CD8-positive, alpha-beta T cell (primary cell): ENCODE measurements at regions of chr2 and their contacts with region 1.

Region 1: GRCh38 chr2:27628767-27629709 is at the starts of genes CCDC121 and GPN1:
- DNase-seq: peak; percentile 88 to 97 (median 95)
- ATAC-seq: peak; percentile 98
- H3K4me3 ChIP-seq: peak within 1 kb of the TSS; percentile 94 to 98
- H3K4me3 Mint-ChIP-seq: no peak within 1 kb of the TSS
- H3K27ac ChIP-seq: peak within 1 kb of the TSS; percentile 84 to 91
- H3K27ac Mint-ChIP-seq: peak within 1 kb of the TSS; percentile 46
- H3K4me1 ChIP-seq: peaks cover 18% of the 10 kb centered on the region
- H3K4me1 Mint-ChIP-seq: peaks cover 20% of the 10 kb centered on the region
- H3K27me3 ChIP-seq: no peaks in the 10 kb centered on the region
- H3K27me3 Mint-ChIP-seq: no peaks in the 10 kb centered on the region
- CTCF ChIP-seq: no peak
- total RNA-seq, gene CCDC121: 0.92 to 1.4 TPM
- total RNA-seq, gene GPN1: 40.6 to 41.7 TPM

Region 2: DNA sequence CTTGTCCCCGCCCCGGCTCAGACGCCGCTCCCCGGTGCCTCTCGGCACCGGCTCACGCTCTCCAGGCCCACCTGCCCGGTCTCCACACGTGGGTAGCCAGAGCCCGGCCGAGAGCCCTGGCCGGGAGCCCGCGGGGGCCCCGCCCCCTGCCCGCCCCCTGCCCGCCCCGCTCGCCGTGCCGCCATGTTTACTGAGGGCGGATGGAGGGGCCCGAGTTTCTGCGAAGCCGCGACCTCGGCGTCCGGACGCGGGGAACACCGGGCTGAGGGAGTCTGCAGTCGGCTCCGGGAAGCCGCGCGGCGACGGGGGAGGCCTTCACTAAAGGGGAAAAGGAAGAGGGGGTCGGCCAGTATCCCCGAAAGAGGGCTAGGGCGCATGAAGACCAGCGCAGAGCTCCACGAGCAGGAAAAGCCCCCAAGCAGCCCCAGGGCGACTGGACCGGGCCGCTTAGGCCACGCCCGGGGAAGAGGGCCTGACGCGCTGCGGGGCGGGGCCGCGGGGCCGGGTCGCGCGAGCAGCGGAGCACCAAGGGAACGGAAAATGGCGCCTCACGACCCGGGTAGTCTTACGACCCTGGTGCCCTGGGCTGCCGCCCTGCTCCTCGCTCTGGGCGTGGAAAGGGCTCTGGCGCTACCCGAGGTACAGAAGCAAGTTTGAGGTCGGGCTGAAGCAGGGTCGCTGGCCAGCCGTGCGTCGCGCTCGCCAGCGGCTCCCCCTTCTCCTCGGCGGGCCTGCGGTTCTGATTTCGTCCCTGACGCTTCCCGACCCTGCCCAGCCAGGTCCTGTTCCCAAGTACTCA is 417.0 kb before region 1 on chr2 and contains the starts of genes ATRAID and SLC5A6:
- CTCF ChIA-PET with region 1: no interaction called
- POLR2A ChIA-PET with region 1: no interaction called
- intact Hi-C with region 1: loop called in 1 of 2 experiments (anchors 2 kb)
- DNase-seq: peak; percentile 78 to 94 (median 87)
- ATAC-seq: peak; percentile 84
- H3K4me3 ChIP-seq: peak within 1 kb of the TSS; percentile 67 to 99
- H3K4me3 Mint-ChIP-seq: peak within 1 kb of the TSS; percentile 100
- H3K27ac ChIP-seq: peak within 1 kb of the TSS; percentile 97 to 100
- H3K27ac Mint-ChIP-seq: peak within 1 kb of the TSS; percentile 100
- H3K4me1 ChIP-seq: peaks cover 26% of the 10 kb centered on the region
- H3K4me1 Mint-ChIP-seq: peaks cover 44% of the 10 kb centered on the region
- H3K27me3 ChIP-seq: no peaks in the 10 kb centered on the region
- H3K27me3 Mint-ChIP-seq: no peaks in the 10 kb centered on the region
- CTCF ChIP-seq: no peak
- total RNA-seq, gene ATRAID: 70.0 to 71.7 TPM
- total RNA-seq, gene SLC5A6: 410 to 431 TPM

Region 3: DNA sequence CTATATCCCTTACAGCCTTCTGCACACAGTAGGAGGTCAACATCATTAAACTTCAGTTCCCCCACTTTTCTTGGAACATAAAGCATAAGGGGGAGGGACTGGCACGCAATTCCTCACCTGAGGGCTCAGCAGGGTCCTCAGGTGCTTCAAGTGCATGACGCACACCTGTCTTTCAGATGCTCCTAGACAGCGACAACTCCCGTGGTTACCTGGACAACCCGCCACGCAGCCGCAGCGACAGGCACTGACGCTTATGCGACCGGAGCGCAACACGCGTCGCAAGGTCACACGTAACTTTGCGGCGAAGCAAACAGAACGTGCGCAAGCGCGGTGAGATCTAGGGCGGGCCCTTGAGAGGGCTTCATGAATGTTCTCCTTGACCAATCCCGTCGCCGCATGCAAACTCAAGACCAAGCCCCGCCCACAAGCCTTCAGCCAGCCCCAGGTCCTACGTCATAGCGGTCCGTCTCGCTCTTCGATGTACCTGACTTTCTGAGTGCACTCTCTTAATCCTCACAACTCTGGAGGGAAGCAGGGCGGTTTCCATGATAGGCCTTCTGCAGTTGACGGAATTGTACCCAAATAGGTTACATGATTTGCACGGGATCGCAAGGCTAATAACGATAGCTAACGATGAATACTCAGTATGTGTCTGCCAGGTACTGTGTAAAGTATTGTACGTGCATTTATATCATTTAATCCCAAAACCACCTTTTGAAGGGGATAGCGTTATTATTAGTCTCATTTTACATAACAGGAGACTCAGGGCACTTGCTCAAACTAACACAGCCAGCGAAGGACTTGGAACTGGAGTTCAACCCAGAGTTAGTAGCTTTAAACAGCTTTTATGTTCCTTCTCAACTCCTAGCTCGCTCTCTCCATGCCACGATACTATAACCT is 139.3 kb before region 1 on chr2 and contains the start of gene IFT172:
- CTCF ChIA-PET with region 1: no interaction called
- POLR2A ChIA-PET with region 1: interaction called, 3 read pairs
- intact Hi-C with region 1: loop called (anchors 1 kb)
- DNase-seq: peak; percentile 98 to 100 (median 99)
- ATAC-seq: peak; percentile 91
- H3K4me3 ChIP-seq: peak within 1 kb of the TSS; percentile 53 to 57
- H3K4me3 Mint-ChIP-seq: peak within 1 kb of the TSS; percentile 82
- H3K27ac ChIP-seq: peak within 1 kb of the TSS; percentile 85 to 90
- H3K27ac Mint-ChIP-seq: peak within 1 kb of the TSS; percentile 94
- H3K4me1 ChIP-seq: peaks cover 20% of the 10 kb centered on the region
- H3K4me1 Mint-ChIP-seq: peaks cover 21% of the 10 kb centered on the region
- H3K27me3 ChIP-seq: peaks cover 7 to 10% of the 10 kb centered on the region in 2 experiments
- H3K27me3 Mint-ChIP-seq: peaks cover 13% of the 10 kb centered on the region
- CTCF ChIP-seq: no peak
- total RNA-seq, gene IFT172: 15.0 to 17.2 TPM

Region 4: DNA sequence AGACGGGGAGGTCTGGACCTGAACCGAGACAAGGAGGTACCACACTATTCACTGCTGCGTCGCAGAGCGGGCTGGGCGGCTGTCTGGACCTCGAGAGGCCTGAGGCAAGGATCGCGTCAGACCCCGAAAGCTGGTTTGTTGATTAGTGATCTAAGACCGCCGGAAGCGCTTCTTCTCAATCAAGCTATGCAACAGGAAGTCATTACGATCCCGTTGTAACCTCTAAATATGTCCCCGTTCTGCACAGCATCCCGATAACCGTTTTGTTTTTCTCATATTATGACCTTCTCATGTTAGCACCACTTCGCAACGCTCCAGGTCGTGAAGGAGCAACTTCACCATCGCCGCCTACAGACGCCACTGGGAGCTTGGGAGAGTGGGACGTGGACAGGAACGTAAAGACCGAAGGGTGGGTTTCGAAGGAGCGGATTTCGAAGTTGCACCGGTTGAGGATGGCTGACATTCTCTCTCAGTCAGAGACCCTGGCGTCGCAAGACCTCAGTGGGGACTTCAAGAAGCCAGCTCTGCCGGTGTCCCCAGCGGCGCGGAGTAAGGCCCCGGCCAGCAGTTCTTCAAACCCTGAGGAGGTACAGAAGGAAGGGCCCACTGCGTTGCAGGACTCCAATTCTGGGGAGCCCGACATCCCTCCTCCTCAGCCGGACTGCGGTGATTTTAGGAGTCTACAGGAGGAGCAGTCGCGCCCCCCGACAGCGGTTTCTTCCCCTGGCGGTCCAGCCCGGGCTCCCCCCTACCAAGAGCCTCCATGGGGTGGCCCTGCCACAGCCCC is 34.6 kb after region 1 on chr2 and contains the starts of genes SLC4A1AP and SUPT7L:
- CTCF ChIA-PET with region 1: no interaction called
- POLR2A ChIA-PET with region 1: interaction called, 6 read pairs
- intact Hi-C with region 1: loop called (anchors 1 kb)
- DNase-seq: peak; percentile 54 to 90 (median 74)
- ATAC-seq: peak; percentile 81
- H3K4me3 ChIP-seq: peak within 1 kb of the TSS; percentile 96 to 99
- H3K4me3 Mint-ChIP-seq: peak within 1 kb of the TSS; percentile 100
- H3K27ac ChIP-seq: peak within 1 kb of the TSS; percentile 95 to 98
- H3K27ac Mint-ChIP-seq: peak within 1 kb of the TSS; percentile 100
- H3K4me1 ChIP-seq: peaks cover 28% of the 10 kb centered on the region
- H3K4me1 Mint-ChIP-seq: peaks cover 60% of the 10 kb centered on the region
- H3K27me3 ChIP-seq: no peaks in the 10 kb centered on the region
- H3K27me3 Mint-ChIP-seq: no peaks in the 10 kb centered on the region
- CTCF ChIP-seq: no peak
- total RNA-seq, gene SLC4A1AP: 21.4 to 22.8 TPM
- total RNA-seq, gene SUPT7L: 54.0 to 55.5 TPM

Region 5: DNA sequence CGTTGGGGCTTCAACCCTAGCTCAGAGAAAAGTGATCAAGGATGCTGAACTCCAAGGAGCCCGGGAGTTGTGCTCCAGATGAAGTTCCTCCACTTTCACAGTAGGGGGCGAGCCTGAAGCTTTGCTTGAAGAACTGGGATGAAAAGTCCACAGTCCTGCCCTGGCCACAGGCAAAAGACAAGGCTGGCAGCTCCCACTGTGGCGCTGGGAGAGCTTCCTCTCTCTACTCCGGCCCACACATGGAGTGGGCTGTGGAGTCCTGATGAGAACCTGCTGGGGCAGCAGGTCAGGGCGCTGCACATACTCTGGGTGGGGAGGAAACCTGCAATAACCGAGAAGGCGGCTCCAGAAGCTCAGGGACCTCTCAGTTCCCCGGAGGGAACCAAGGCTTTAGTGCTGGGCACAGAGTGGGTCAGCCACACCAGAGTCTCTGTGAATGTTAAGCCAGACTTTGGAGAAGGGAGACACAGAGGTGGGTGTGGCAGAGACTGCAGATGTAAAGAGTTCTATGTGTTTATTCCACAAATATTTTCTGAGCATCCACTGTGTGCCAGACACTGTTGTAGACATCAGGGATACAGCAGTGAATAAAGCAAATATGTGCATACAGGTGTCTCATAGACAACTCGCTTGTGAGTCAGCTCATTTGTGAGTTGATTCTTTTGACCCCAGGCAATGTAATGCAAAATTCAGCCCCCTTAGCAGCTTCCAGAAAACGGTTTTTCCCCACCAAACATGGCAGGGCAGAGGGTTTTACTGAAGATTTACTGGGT is 94.5 kb after region 1 on chr2:
- CTCF ChIA-PET with region 1: no interaction called
- POLR2A ChIA-PET with region 1: no interaction called
- intact Hi-C with region 1: no loop called
- DNase-seq: peak in 5 of 9 experiments; percentile 16 to 48 (median 32)
- ATAC-seq: no peak
- H3K4me3 ChIP-seq: no peak overlapping the region
- H3K4me3 Mint-ChIP-seq: no peak overlapping the region
- H3K27ac ChIP-seq: no peak overlapping the region
- H3K27ac Mint-ChIP-seq: no peak overlapping the region
- H3K4me1 ChIP-seq: no peaks in the 10 kb centered on the region
- H3K4me1 Mint-ChIP-seq: no peaks in the 10 kb centered on the region
- H3K27me3 ChIP-seq: peaks cover 2 to 4% of the 10 kb centered on the region in 2 experiments
- H3K27me3 Mint-ChIP-seq: peaks cover 17% of the 10 kb centered on the region
- CTCF ChIP-seq: peak; percentile 54

Region 6: DNA sequence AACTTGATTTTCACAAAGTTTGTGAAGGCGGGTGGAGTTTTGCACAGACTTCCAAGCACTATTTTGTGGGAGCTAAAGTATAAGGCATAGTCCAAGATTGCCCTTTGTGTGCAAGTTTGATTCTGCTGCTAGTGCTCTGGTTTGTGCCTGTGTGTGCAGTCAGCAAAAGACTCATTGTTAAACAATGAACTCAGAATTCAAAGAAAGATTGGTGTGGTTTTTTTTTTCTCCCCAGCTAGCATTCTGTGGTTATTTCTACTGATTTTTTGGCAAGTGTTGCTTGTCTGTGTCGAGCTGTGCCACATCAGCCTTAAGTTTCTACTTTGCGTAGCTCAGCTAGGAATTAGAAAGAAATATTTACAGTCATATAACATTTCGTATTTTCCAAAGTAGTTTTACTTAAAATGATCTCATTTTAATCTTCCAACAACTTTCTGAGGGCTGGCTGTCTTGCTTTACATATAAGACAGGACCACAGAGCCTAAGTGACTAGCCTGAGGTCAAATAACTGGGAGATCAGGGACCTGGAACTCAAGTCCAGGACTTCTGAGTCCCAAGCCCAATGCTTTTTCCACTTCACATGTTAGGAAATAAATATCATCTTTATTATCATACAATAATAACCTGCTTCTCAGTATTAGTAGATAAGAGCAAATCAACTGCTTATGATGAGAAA is 331.3 kb after region 1 on chr2:
- CTCF ChIA-PET with region 1: no interaction called
- POLR2A ChIA-PET with region 1: no interaction called
- intact Hi-C with region 1: no loop called
- DNase-seq: peak in 3 of 9 experiments; percentile 22 to 59 (median 31)
- ATAC-seq: peak; percentile 85
- H3K4me3 ChIP-seq: no peak overlapping the region
- H3K4me3 Mint-ChIP-seq: peak overlapping the region; percentile 37
- H3K27ac ChIP-seq: no peak overlapping the region
- H3K27ac Mint-ChIP-seq: peak overlapping the region; percentile 33
- H3K4me1 ChIP-seq: peaks cover 27% of the 10 kb centered on the region
- H3K4me1 Mint-ChIP-seq: peaks cover 57% of the 10 kb centered on the region
- H3K27me3 ChIP-seq: no peaks in the 10 kb centered on the region
- H3K27me3 Mint-ChIP-seq: no peaks in the 10 kb centered on the region
- CTCF ChIP-seq: no peak

Region 7: DNA sequence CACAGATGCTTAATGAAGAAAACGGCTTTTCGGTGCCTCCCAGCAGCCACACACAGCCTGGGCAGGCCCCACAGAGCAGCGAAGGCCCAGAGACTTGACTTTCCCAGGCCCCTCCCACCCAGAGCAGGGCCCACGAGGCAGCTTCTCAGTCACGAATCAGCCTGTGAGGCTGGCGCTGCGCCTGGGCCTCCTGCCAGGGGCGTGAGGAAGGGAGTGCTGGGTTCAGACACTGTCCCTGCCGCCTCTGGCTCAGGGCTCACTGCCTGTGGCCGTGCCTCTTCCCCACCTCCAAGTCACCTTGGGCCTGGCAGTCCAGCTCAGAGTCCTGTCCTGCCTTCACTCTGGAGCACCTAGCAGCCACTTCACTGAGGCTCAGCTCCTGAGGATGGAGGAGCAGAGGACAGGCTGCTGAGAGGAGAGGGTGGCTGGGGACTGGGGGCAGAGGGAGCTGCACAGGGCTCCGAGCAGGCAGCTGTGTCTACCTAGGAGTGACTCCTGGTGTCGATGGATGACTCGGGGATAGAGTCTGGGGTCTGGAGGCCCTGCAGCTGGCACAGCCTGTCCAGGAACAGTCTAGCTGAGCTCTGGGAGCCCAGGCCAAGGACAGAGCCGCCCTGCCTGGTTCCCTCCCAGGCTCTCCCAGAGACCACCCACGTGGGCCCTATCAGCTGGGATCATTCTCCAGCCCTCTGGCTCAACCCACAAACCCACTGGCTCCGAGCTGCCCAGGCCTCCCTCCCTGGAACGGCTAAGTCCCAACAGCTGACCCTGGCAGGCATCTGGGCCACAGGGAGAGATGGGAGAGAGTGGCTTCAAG is 727.3 kb after region 1 on chr2:
- CTCF ChIA-PET with region 1: no interaction called
- POLR2A ChIA-PET with region 1: no interaction called
- intact Hi-C with region 1: no loop called
- DNase-seq: peak in 4 of 9 experiments; percentile 43 to 79 (median 64)
- ATAC-seq: no peak
- H3K4me3 ChIP-seq: no peak overlapping the region
- H3K4me3 Mint-ChIP-seq: no peak overlapping the region
- H3K27ac ChIP-seq: peak overlapping the region in 1 of 2 experiments; percentile 46
- H3K27ac Mint-ChIP-seq: peak overlapping the region; percentile 41
- H3K4me1 ChIP-seq: peaks cover 36% of the 10 kb centered on the region
- H3K4me1 Mint-ChIP-seq: peaks cover 34% of the 10 kb centered on the region
- H3K27me3 ChIP-seq: no peaks in the 10 kb centered on the region
- H3K27me3 Mint-ChIP-seq: no peaks in the 10 kb centered on the region
- CTCF ChIP-seq: no peak